MCF 10A (cell line): ENCODE measurements at regions of chr5 and their contacts with region 1.

Region 1: GRCh38 chr5:111063700-111064322 is 7.7 kb upstream of the TSLP start:
- DNase-seq: peak; percentile 58
- H3K4me3 Mint-ChIP-seq: no peak overlapping the region
- H3K27ac Mint-ChIP-seq: no peak overlapping the region
- H3K4me1 Mint-ChIP-seq: peaks cover 6% of the 10 kb centered on the region
- H3K27me3 Mint-ChIP-seq: no peaks in the 10 kb centered on the region
- CTCF ChIP-seq: peak; percentile 50

Region 2: GRCh38 chr5:110865400-110866094 is 198.3 kb before region 1 on chr5:
- CTCF ChIA-PET with region 1: interaction called, 3 read pairs
- POLR2A ChIA-PET with region 1: no interaction called
- intact Hi-C with region 1: loop called (anchors 1 kb)
- DNase-seq: peak; percentile 76
- H3K4me3 Mint-ChIP-seq: no peak overlapping the region
- H3K27ac Mint-ChIP-seq: no peak overlapping the region
- H3K4me1 Mint-ChIP-seq: no peaks in the 10 kb centered on the region
- H3K27me3 Mint-ChIP-seq: peaks cover 14% of the 10 kb centered on the region
- CTCF ChIP-seq: peak; percentile 42

Region 3: DNA sequence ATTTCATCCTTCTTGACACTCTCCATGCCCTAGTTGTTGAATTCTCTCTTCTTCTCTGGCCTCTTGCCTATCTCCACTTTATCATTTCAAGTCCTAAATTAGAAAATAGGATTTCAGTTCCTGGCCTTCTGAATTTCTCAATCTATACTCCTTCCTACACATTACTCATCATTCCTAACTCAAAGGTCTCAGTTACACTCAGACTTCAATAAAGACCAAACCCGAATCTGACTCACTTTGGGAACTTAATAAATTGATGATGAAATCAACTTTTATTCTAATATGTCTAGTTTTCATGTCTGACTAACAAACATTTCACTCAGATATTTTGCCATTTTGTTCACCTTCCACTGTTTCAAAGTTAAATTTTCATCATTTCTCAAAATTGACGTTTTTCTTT is 105.9 kb before region 1 on chr5:
- CTCF ChIA-PET with region 1: interaction called, 3 read pairs
- POLR2A ChIA-PET with region 1: interaction called, 3 read pairs
- intact Hi-C with region 1: loop called (anchors 10 kb)
- DNase-seq: peak; percentile 85
- H3K4me3 Mint-ChIP-seq: no peak overlapping the region
- H3K27ac Mint-ChIP-seq: peak overlapping the region; percentile 5
- H3K4me1 Mint-ChIP-seq: peaks cover 15% of the 10 kb centered on the region
- H3K27me3 Mint-ChIP-seq: no peaks in the 10 kb centered on the region
- CTCF ChIP-seq: no peak

Region 4: GRCh38 chr5:111280282-111280951 is 216.6 kb after region 1 on chr5:
- CTCF ChIA-PET with region 1: no interaction called
- POLR2A ChIA-PET with region 1: no interaction called
- intact Hi-C with region 1: no loop called
- DNase-seq: no peak
- H3K4me3 Mint-ChIP-seq: no peak overlapping the region
- H3K27ac Mint-ChIP-seq: no peak overlapping the region
- H3K4me1 Mint-ChIP-seq: no peaks in the 10 kb centered on the region
- H3K27me3 Mint-ChIP-seq: peaks cover 19% of the 10 kb centered on the region
- CTCF ChIP-seq: no peak

Region 5: DNA sequence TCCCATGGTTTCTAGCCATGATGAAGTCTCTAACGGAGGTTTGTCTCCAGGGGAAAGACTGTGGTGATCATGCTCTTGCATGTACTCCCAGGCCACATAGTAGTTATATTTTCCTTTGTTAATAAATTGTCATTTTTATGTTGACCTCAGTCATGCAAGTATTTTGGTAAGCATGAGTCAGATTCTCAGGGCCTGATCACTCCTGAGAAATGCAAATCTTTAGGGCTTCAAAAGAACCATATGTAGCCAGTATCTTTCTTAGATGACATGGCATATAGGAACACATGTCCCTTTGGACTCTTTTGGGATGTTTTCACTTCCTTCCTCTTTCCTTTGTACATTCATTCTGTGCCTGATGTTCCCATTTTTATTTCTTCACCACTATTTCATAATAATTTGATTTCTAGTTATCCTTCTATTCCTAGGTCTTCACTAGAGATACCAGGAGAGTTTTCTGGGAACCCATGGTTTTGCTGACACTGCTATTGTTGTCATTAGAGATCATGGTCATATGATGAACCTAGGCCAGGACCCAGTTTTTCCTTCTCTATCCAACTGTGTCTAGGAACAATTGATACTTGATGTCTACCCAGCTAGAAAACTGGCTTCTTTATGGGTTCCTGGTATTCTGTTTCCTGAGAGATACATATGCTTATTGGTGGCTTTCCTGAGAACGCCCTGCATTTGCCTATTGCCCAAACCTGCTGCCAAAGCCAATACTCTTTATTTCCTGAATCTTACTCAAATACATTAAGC is 941.2 kb after region 1 on chr5:
- CTCF ChIA-PET with region 1: no interaction called
- POLR2A ChIA-PET with region 1: no interaction called
- intact Hi-C with region 1: no loop called
- DNase-seq: no peak
- H3K4me3 Mint-ChIP-seq: no peak overlapping the region
- H3K27ac Mint-ChIP-seq: no peak overlapping the region
- H3K4me1 Mint-ChIP-seq: peaks cover 12% of the 10 kb centered on the region
- H3K27me3 Mint-ChIP-seq: no peaks in the 10 kb centered on the region
- CTCF ChIP-seq: no peak